Uterus (tissue), 4 donors: ENCODE measurements at regions of chr1 and their contacts with region 1.

Region 1: DNA sequence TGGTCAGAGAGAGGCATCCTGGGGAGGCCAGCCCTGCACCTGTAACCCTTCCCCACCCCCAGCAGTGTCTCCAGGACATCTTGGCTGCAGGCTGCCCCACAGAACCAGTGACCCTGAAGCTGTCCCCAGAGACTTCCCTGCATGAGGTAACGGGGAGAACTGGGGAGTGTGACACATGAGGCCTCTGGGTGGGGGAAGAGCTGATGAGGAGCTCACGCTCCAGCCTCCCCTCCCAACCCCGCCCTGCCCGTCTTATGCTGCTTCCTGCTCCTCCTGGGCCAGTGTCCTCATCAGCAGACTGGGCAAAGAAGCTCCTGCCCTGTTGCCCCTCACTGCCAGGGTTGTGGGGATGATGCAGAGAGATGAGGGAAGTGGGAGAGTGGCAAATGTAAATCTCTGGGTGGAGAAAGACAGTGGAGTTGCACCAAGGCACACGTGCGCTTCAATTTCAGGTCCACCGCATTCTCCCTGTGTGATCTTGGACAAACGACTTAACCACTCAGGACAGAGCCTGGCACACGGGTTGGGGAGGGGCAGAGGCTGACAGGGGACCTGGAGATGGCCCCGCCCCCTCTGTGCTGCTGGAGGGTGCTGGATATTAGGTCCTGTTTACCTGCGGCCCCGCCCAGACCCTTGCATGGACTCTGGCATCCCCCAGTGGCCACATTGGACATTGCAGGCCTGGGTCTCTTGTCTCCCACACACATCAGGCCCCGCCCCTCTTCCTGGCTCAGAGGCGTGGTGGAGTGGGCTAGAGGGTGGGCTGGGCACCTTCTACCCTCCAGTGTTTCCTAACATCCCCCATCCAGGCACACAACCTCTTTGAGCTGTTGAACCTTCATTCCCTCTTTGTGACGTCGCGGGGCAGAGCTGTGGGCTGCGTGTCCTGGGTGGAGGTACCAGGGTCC is 12.3 kb downstream of the CLCNKB start:
- DNase-seq: peak; percentile 85 to 88
- H3K4me3 ChIP-seq: no peak overlapping the region
- H3K27ac ChIP-seq: no peak overlapping the region
- H3K4me1 ChIP-seq: no peaks in the 10 kb centered on the region
- H3K27me3 ChIP-seq: no peaks in the 10 kb centered on the region
- CTCF ChIP-seq: peak; percentile 87 to 97 (median 96)
- POLR2A ChIP-seq: no peak

Region 2: GRCh38 chr1:15985611-15986297 is 70.1 kb before region 1 on chr1:
- intact Hi-C with region 1: no loop called
- DNase-seq: no peak
- H3K4me3 ChIP-seq: no peak overlapping the region
- H3K27ac ChIP-seq: no peak overlapping the region
- H3K4me1 ChIP-seq: no peaks in the 10 kb centered on the region
- H3K27me3 ChIP-seq: no peaks in the 10 kb centered on the region
- CTCF ChIP-seq: no peak
- POLR2A ChIP-seq: no peak

Region 3: GRCh38 chr1:16009030-16009709 is 46.7 kb before region 1 on chr1:
- intact Hi-C with region 1: loop called (anchors 2 kb)
- DNase-seq: peak; percentile 83 to 88
- H3K4me3 ChIP-seq: no peak overlapping the region
- H3K27ac ChIP-seq: no peak overlapping the region
- H3K4me1 ChIP-seq: peaks cover 6 to 15% of the 10 kb centered on the region in 2 donors
- H3K27me3 ChIP-seq: no peaks in the 10 kb centered on the region
- CTCF ChIP-seq: peak; percentile 95 to 98 (median 98)
- POLR2A ChIP-seq: no peak

Region 4: GRCh38 chr1:16440470-16441281 is 384.8 kb after region 1 on chr1 and contains the start of gene NECAP2:
- intact Hi-C with region 1: no loop called
- DNase-seq: peak; percentile 88 to 94
- H3K4me3 ChIP-seq: peak within 1 kb of the TSS; percentile 65 to 80
- H3K27ac ChIP-seq: peak within 1 kb of the TSS; percentile 65 to 70
- H3K4me1 ChIP-seq: peaks cover 0 to 5% of the 10 kb centered on the region in 2 donors
- H3K27me3 ChIP-seq: no peaks in the 10 kb centered on the region
- CTCF ChIP-seq: peak; percentile 89 to 92 (median 90)
- POLR2A ChIP-seq: peak in 1 of 2 donors; percentile 32
- total RNA-seq, gene NECAP2: 36.0 to 60.1 (median 38.6) TPM